ENCODE measurements at regions of chr10 and their contacts with region 1.

Region 1: GRCh38 chr10:12884380-12884779 is 117.1 kb downstream of the CCDC3 start:
- DNase-seq: no peak
- H3K4me3 Mint-ChIP-seq: no peak overlapping the region
- H3K27ac Mint-ChIP-seq: no peak overlapping the region
- H3K4me1 Mint-ChIP-seq: no peaks in the 10 kb centered on the region
- H3K27me3 Mint-ChIP-seq: peaks cover 13% of the 10 kb centered on the region

Region 2: DNA sequence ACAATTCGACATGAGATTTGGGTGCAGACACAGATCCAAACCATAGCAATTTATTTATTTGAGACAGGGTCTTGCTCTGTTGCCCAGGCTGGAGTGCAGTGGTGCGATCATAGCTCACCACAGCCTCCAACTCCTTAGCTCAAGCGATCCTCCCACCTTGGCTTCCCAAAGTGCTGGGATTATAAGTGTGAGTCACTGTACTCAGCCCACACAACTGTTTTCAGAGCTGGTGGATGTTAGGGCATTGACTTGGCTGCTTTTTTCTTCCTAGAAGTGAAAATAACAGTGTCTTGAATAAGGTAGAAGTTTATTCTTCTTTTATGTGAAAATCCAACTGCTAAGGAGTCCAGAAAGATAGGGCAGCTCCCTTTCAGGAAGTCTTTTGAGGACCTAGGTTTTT is 15.0 kb before region 1 on chr10:
- intact Hi-C with region 1: loop called (anchors 1 kb)
- DNase-seq: no peak
- H3K4me3 Mint-ChIP-seq: no peak overlapping the region
- H3K27ac Mint-ChIP-seq: no peak overlapping the region
- H3K4me1 Mint-ChIP-seq: no peaks in the 10 kb centered on the region
- H3K27me3 Mint-ChIP-seq: no peaks in the 10 kb centered on the region

Measured in activated T-helper 2 cell treated with anti-CD3 and anti-CD28 coated beads, Interferon-gamma antibody, Interleukin-2, Interleukin-4, amounts not matched to agents 10 μg/mL and 5 μg/mL and 100 μg/mL, durations not matched to agents 14 hours and 24 hours and 36 hours (primary cell).